Astrocyte of the cerebellum (primary cell): ENCODE measurements at regions of chr7 and their contacts with region 1.

Region 1: DNA sequence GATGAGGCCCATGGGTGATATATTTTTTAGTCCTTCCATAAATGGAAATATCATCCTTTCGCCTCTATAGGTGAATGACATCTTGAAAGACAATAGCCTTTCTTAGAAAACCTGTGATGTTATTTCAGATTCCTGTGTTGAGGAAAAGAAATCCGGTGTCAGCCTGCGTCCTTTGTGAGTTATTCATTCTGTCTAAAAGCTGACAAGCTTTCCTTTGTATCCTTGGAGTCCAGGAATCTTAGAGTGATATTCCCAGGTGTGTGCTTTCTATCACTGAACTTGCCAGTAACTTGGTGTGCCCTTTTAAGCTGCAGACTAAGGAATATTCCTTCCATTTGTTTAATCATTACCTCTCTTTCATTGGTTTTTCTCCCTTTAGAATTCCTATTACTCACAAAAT is 41.0 kb downstream of the EVX1 start:
- DNase-seq: no peak
- H3K4me3 ChIP-seq: no peak overlapping the region
- CTCF ChIP-seq: no peak

Region 2: DNA sequence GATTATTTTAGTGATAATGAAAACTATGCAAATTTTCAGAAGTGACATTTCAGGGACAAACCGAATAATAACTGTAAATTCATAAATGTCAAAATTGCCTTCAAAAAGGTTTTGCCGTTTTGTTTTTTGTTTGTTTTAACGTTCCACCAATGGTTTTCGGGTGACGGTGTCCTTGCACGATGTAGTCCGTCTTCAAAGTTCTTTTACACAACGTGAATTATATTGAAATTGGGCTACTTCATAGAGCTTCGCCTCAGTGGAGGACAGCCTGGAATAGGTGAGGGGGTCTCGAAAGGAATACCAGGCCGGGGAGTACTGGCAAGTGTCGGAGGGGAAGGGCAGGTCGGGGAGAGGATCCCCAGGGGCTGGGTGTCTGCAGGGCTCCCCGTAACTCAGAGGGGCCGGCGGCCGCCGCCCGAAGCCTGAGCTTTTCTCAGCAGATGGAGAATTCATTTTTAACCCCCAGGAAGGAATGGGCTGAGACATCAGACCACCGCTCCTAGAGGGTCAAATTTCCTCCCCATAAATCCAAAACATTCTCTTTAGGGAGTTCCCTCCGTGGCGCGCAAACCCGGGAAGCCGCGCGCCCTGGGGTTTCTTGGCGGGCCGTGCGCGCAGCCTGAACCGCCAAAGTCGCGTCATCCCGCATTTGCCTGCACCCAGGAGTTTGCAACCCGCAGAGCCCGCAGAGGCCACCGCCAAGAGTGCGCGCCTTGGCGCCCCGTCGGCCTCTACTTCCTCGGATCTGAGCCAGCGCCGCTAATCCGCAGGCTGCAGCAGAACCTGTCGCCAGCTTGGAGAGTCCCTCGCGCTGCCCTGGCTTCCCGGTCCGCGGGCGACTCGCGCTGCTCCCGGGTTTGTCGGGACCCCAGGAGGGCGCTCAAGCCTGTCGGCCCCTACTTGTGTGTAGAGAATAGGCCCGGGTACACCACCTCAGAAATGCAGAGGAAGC is 58.3 kb before region 1 on chr7:
- in situ Hi-C with region 1: loop called (anchors 5 kb)
- DNase-seq: no peak
- H3K4me3 ChIP-seq: no peak overlapping the region
- CTCF ChIP-seq: no peak

Region 3: DNA sequence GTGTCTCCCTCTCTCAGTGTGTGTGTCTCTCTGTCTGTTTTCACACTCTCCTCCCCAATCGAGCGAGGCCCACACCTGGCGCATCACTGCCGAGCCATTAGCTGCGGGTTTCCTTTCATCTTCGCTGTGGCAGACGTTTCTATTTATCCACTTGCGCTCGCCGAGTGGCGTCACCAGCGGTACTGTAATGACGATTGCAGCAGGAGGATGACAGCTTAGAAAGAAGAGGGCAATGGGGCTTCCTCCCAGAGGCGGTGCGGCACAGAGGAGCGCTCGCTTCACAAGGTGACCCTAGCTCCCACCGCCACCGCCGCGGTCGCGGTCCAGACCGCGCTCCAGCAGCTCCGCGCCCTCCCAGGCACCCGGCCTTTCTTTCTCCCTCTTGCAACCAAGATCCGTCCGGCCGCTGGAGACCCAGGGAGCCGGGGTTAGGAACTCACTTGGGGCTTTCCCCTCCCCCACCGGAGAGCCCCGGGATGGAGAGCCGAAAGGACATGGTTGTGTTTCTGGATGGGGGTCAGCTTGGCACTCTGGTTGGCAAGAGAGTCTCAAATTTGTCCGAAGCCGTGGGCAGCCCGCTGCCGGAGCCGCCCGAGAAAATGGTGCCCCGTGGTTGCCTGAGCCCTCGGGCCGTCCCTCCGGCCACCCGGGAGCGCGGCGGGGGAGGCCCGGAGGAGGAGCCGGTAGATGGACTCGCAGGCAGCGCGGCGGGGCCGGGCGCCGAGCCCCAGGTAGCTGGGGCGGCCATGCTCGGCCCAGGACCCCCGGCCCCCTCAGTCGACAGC is 40.8 kb before region 1 on chr7 and contains the start of gene EVX1:
- in situ Hi-C with region 1: no loop called
- DNase-seq: no peak
- H3K4me3 ChIP-seq: no peak within 1 kb of the TSS
- CTCF ChIP-seq: no peak